Heart right ventricle (tissue), 16 donors: ENCODE measurements at regions of chr3 and their contacts with region 1.

Region 1: DNA sequence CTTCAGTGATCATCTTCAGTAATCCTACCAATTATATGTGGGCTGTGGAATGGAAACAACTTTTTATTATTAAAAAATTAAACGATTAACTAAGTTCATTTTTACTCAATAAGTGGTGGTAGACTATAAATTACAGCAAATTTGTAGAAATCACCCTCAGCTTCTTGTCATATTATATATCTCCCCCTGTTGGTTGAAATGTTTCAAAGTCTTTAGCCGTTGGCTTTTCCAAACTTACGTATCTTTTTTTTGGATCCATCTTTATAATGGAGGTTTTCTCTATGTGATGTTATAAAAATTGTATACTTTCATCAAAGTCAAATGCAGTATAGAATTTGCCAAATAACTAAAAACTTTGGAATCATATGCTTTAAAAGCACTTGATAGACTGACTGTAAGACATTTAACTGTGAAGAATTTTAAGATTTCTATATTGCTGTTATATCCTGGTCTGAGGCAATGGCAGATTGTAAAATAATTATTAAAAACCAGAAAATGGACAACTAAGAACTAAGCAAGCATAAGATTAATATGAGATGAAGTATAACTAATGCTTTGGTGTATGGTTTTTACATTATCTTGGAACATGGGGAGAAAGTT is 44.7 kb downstream of the ATP11B start:
- DNase-seq: no peak
- ATAC-seq: no peak
- H3K4me3 ChIP-seq: no peak overlapping the region
- H3K27ac ChIP-seq: no peak overlapping the region
- H3K4me1 ChIP-seq: no peaks in the 10 kb centered on the region
- H3K27me3 ChIP-seq: no peaks in the 10 kb centered on the region
- CTCF ChIP-seq: peak in 7 of 9 donors; percentile 34 to 69 (median 57)

Region 2: DNA sequence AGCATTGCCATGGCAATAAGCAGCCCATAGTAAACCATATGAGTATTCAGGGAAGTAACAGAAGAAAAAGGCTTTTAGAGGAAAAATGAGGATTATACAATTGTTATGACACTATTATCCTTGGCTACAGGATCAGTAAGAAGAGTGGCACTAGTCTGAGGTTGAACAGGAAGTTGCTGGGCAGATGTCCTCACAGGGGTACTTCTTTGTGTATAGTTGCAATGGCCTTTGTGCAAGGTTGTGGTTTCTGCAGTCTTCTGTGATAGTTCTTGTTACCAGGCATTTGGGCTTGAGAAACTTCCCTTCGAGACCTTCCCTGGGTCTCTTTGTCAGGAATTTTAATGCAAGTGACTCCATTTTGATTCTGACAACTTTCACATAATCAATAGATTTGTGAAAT is 145.3 kb before region 1 on chr3:
- intact Hi-C with region 1: no loop called
- DNase-seq: no peak
- ATAC-seq: no peak
- H3K4me3 ChIP-seq: no peak overlapping the region
- H3K27ac ChIP-seq: no peak overlapping the region
- H3K4me1 ChIP-seq: no peaks in the 10 kb centered on the region
- H3K27me3 ChIP-seq: peaks cover 0 to 57% (median 32%) of the 10 kb centered on the region in 7 donors
- CTCF ChIP-seq: no peak

Region 3: DNA sequence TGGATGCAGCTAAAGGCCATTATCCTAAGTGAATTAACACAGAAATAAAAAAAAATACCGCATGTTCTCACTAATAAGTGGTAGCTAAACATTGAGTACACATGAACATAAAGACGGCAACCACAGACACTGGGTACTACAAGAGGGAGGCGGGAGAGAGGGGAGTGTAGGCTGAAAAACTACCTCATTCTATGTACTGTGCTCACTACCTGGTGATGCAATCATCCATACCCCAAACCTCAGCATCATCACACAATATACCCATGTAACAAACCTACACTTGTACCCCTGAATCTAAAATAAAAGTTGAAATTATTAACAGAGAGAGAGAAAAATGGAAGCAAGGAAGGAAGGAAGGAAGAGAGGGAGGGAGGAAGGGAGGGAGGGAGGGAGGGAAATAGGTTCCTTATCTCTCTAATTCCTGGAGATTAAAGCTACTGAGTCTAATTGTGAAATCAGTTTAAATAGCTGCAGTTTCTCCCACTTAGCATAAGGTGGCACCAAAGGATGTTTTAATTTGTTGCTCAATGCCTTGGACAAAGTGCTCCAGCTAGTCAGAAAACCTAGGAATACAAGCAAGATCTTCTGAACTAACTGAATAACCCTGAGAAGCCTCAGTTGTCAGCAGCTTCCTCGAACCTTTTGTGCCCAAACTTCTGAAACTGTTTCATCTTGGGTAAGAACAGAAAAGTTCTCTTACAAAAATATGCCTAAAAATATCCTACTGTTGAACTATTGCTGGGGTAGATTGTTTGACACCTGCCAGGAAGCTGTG is 124.0 kb before region 1 on chr3:
- intact Hi-C with region 1: loop called (anchors 2 to 5 kb)
- DNase-seq: no peak
- ATAC-seq: peak; percentile 61 to 90 (median 80)
- H3K4me3 ChIP-seq: no peak overlapping the region
- H3K27ac ChIP-seq: no peak overlapping the region
- H3K4me1 ChIP-seq: peaks cover 0 to 14% (median 6%) of the 10 kb centered on the region in 9 donors
- H3K27me3 ChIP-seq: no peaks in the 10 kb centered on the region
- CTCF ChIP-seq: peak; percentile 34 to 74 (median 61)